ENCODE measurements at regions of chr12 and their contacts with region 1.

Region 1: DNA sequence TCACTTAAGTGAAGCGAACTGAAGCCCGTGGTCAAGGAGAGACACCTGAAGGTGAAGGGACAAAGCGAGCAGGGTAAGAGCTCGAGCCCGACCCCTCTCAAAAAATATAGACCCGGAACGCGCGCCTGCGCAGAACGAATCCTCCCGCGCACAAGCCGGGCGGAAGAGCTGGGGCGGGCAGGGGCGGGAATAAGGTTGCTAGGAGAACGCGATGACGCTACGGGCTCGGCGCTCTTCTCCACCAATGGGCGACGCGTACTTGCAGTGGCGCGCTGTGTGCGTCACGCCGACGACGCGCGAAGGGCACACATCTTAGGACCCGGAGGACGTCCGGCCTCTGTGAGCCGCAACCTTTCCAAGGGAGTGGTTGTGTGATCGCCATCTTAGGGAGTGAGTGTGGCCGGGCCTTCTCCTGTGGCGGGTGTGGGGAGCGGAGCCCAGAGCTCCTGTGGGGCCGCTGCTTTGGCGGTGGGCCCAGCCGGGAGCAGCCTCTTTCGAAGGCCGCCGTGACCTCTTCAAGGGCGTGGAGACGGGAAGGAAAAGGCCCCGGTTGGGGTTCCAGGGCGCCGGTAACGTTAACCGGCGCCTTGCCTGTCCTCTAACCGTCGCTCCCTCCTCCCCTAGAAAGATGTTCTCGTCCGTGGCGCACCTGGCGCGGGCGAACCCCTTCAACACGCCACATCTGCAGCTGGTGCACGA is at the start of gene SLC25A3:
- DNase-seq: peak; percentile 98
- ATAC-seq: peak; percentile 99
- total RNA-seq, gene SLC25A3: 1,808 TPM

Region 2: GRCh38 chr12:98644711-98645402 is 51.4 kb after region 1 on chr12 and contains the starts of genes APAF1 and IKBIP:
- intact Hi-C with region 1: loop called (anchors 10 kb)
- DNase-seq: peak; percentile 99
- ATAC-seq: peak; percentile 99
- total RNA-seq, gene APAF1: 4.1 TPM
- total RNA-seq, gene IKBIP: 3.3 TPM

Region 3: DNA sequence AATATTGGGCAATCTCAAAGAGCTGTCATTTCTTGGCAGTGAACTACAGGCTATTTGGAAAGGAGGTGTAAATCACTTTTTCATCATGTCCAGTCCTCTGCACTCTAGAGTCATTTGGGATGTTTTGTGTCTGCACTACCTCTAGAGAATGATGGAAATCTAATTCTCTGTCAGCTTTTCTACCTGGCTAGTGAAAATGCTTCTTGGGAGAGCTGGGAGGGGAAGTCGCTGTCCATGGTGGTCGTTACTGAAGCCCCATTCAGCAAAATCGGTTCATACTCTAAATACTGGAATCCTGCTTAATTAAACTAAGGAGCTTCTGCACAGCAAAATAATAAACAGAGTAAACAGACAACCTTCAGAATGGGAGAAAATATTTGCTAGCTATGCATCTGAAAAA is 303.4 kb after region 1 on chr12:
- intact Hi-C with region 1: no loop called
- DNase-seq: no peak
- ATAC-seq: no peak